Heart right ventricle (tissue), 16 donors: ENCODE measurements at regions of chr6 and their contacts with region 1.

Region 1: GRCh38 chr6:24489881-24490280 is 503 bp upstream of the GPLD1 start:
- DNase-seq: peak in 1 of 2 donors; percentile 7
- ATAC-seq: peak in 6 of 8 donors; percentile 43 to 85 (median 72)
- H3K4me3 ChIP-seq: no peak overlapping the region
- H3K27ac ChIP-seq: no peak overlapping the region
- H3K4me1 ChIP-seq: peaks cover 0 to 14% (median 8%) of the 10 kb centered on the region in 9 donors
- H3K27me3 ChIP-seq: peaks cover 0 to 15% (median 0%) of the 10 kb centered on the region in 7 donors
- CTCF ChIP-seq: no peak

Region 2: GRCh38 chr6:24125980-24126379 is 363.9 kb before region 1 on chr6 and contains the start of gene NRSN1:
- intact Hi-C with region 1: no loop called
- DNase-seq: no peak
- ATAC-seq: peak in 1 of 8 donors; percentile 20
- H3K4me3 ChIP-seq: no peak within 1 kb of the TSS
- H3K27ac ChIP-seq: no peak within 1 kb of the TSS
- H3K4me1 ChIP-seq: no peaks in the 10 kb centered on the region
- H3K27me3 ChIP-seq: peaks cover 0 to 36% (median 20%) of the 10 kb centered on the region in 7 donors
- CTCF ChIP-seq: no peak
- total RNA-seq, gene NRSN1: not detected

Region 3: GRCh38 chr6:24402697-24403501 is 87.0 kb before region 1 on chr6 and contains the start of gene MRS2:
- intact Hi-C with region 1: loop called in 1 of 10 experiments (anchors 2 kb)
- DNase-seq: peak; percentile 84 to 86
- ATAC-seq: peak; percentile 97 to 100 (median 99)
- H3K4me3 ChIP-seq: peak within 1 kb of the TSS; percentile 57 to 91 (median 78)
- H3K27ac ChIP-seq: peak within 1 kb of the TSS; percentile 66 to 92 (median 88)
- H3K4me1 ChIP-seq: peaks cover 0 to 30% (median 14%) of the 10 kb centered on the region in 9 donors
- H3K27me3 ChIP-seq: peaks cover 0 to 22% (median 18%) of the 10 kb centered on the region in 7 donors
- CTCF ChIP-seq: no peak
- total RNA-seq, gene MRS2: 36.7 to 68.6 (median 52.6) TPM